ENCODE measurements at regions of chr1 and their contacts with region 1.

Region 1: DNA sequence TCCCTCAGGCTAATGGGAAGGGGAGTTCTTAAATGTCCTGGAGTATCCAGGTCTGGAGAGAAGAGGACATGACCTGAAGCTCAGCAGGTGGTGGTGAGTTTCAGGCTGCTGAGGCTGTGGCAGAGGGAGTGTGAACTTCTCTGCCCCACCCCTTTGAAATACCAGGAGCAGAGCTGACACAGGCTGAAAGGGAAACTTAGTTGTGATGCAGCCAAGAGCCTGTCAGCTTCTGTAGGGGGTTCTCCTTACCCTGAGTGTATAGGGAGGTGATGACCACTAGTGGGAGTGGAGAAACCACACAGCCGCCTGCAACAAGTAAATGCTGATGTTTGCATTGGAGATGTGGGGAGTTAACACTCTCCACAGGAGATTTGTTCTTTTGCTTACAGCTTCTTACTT is 152.3 kb downstream of the FCRL5 start:
- DNase-seq: no peak
- H3K4me3 ChIP-seq: no peak overlapping the region
- H3K4me3 Mint-ChIP-seq: no peak overlapping the region
- H3K27ac ChIP-seq: no peak overlapping the region
- H3K27ac Mint-ChIP-seq: peak overlapping the region in 1 of 7 donors; percentile 40
- H3K4me1 ChIP-seq: peaks cover 45 to 52% of the 10 kb centered on the region in 2 donors
- H3K4me1 Mint-ChIP-seq: peaks cover 56% of the 10 kb centered on the region
- H3K27me3 ChIP-seq: no peaks in the 10 kb centered on the region
- H3K27me3 Mint-ChIP-seq: peaks cover 0 to 2% (median 0%) of the 10 kb centered on the region in 3 donors
- CTCF ChIP-seq: no peak

Region 2: GRCh38 chr1:157438146-157438545 is 38.2 kb after region 1 on chr1:
- intact Hi-C with region 1: loop called in 1 of 2 experiments (anchors 5 kb)
- DNase-seq: peak in 2 of 3 donors; percentile 7 to 11
- H3K4me3 ChIP-seq: no peak overlapping the region
- H3K4me3 Mint-ChIP-seq: no peak overlapping the region
- H3K27ac ChIP-seq: peak overlapping the region in 1 of 2 donors; percentile 74
- H3K27ac Mint-ChIP-seq: peak overlapping the region in 5 of 7 donors; percentile 45 to 90 (median 67)
- H3K4me1 ChIP-seq: peaks cover 44 to 45% of the 10 kb centered on the region in 2 donors
- H3K4me1 Mint-ChIP-seq: peaks cover 47% of the 10 kb centered on the region
- H3K27me3 ChIP-seq: no peaks in the 10 kb centered on the region
- H3K27me3 Mint-ChIP-seq: peaks cover 0 to 3% (median 2%) of the 10 kb centered on the region in 3 donors
- CTCF ChIP-seq: no peak

Measured in CD14-positive monocyte (primary cell).